ENCODE measurements at regions of chr12 and their contacts with region 1.

Region 1: GRCh38 chr12:56448860-56449621 is at the start of gene TIMELESS:
- DNase-seq: peak; percentile 89
- H3K4me3 ChIP-seq: peak within 1 kb of the TSS; percentile 59 to 74
- H3K27ac ChIP-seq: peak within 1 kb of the TSS; percentile 93
- H3K4me1 ChIP-seq: no peaks in the 10 kb centered on the region
- H3K27me3 ChIP-seq: no peaks in the 10 kb centered on the region
- CTCF ChIP-seq: peak in 1 of 4 experiments; percentile 48
- POLR2A ChIP-seq: peak; percentile 53
- total RNA-seq, gene TIMELESS: 8.0 to 12.3 TPM

Region 2: DNA sequence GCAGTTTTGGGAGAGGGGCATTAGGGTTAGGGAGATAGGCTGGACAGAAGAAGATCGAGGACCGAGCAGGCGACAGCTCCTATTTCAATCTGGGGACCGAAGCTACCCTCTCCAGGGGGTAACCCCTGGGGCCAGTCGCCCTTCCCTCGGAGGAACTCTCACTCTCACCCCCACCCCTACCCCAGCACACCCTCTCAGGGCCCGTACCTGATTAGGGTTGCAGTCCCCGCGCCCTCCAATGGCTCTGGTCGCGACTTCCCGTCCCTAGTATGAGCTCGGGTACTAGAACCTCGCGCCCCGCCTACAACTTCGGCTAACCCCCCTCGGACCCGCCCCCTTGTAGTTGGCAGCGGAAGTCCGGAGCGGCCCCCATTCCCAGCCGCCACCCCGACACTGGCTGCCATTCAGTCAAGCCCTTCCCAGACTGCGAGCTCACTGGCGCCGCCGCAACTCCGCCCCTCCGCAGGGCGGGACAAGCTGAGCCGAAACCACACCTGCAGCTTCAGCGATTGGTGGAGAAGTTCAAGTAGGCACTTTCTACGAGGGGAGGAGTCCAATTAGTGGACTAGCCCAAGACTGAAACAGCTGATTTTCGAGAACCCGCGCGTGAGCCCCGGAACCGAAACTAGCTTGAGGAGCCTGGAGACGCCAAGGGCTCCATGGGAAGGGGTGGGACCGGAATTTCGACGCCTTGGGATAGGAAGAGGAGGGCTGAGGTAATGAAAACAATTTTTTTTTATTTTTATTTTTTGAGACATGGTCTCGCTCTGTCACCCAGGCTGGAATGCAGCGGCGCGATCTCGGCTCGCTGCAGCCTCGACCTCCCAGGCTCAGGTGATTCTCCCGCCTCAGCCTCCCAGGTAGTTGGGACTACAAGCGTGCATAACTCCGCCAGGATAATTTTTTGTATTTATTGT is 88.9 kb before region 1 on chr12 and contains the start of gene STAT2:
- intact Hi-C with region 1: loop called (anchors 5 kb)
- DNase-seq: peak; percentile 99
- H3K4me3 ChIP-seq: peak within 1 kb of the TSS; percentile 64
- H3K27ac ChIP-seq: peak within 1 kb of the TSS; percentile 94 to 96
- H3K4me1 ChIP-seq: no peaks in the 10 kb centered on the region
- H3K27me3 ChIP-seq: no peaks in the 10 kb centered on the region
- CTCF ChIP-seq: peak in 1 of 4 experiments; percentile 37
- POLR2A ChIP-seq: peak; percentile 87
- total RNA-seq, gene STAT2: 99.8 to 128 TPM

Region 3: DNA sequence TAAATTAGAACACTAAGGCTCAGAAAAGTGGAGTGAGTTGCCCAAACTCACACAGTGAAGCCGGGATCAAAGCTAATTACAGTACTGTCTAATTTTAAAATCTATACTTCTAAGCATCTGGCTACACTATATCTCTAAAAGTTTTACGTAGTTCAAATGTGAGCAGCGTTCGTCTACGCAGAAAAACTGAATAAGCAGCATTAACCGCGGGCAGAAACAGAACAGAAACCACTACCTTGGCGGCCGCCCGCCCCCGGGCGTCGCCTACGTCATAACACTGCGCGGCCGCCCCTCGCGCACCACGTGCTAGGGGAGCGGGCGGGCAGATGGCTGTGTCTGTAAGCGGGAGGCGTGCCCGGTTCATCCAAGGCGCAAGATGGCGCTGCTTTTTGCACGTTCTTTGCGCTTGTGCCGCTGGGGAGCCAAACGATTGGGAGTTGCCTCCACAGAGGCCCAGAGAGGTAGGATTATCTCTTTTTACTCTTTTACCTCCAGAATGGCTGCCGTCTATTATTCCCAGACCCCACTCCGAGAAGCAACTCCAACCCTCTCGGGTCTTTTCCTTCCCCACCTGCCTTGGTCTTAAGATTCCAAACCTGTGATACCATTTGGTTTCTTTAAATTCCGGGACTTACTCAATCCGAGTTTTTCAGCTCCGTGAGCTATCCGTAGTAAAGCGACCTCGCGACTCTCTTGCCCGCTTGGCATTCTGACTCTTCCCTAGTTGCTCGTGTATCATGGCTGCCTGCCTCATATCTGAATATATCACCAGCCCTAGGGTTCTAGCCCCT is 19.4 kb after region 1 on chr12 and contains the start of gene SPRYD4:
- intact Hi-C with region 1: loop called (anchors 2 kb)
- DNase-seq: peak; percentile 92
- H3K4me3 ChIP-seq: peak within 1 kb of the TSS; percentile 67 to 81
- H3K27ac ChIP-seq: peak within 1 kb of the TSS; percentile 81 to 85
- H3K4me1 ChIP-seq: peaks cover 3% of the 10 kb centered on the region
- H3K27me3 ChIP-seq: no peaks in the 10 kb centered on the region
- CTCF ChIP-seq: peak in 3 of 4 experiments; percentile 61 to 70 (median 62)
- POLR2A ChIP-seq: peak; percentile 79
- total RNA-seq, gene SPRYD4: 2.6 to 5.1 TPM

Measured in prostate gland (tissue), 2 donors.